Dorsolateral prefrontal cortex (tissue), 120 donors: ENCODE measurements at regions of chr9 and their contacts with region 1.

Region 1: DNA sequence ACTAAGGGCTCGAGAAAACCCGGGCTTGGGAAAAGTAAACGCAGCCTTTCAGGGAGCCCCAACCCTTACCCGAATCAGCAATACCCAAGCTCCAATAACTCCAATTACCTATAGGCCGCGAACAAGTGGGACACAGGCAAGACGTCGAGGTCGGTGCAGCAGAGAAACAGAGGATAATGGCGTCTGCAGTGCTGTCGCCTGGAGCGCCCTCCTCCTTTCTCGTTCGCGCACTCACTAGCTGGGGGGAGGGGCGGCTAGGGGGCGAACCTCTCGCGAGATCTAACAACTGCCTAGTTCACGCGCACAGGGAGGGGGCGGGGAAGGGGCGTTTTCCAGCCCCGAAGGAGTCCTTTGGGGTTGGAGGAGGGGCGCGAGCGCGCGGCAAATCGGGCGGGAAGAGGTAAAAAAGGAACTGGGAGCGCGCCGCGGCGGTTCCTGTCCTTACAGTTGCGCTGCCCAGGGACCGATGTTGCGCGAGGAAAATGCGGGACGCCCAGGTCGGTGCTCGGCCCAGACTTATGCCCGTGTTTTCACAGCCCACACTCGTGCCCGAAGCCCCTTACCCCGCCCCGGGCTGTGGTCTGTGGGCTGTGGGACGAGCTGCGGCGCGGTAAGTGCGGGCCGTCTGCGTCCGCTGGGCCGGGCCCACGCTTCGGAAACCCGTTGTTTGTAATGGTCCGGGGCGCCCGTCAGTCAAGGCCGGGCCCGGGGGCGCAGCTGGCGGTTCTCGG is at the start of gene RMI1:
- DNase-seq: peak; percentile 93 to 99 (median 98)
- H3K4me3 ChIP-seq: peak within 1 kb of the TSS; percentile 69 to 99 (median 93)
- H3K27ac ChIP-seq: peak within 1 kb of the TSS; percentile 94 to 100 (median 99)
- H3K27me3 ChIP-seq: no peaks in the 10 kb centered on the region
- CTCF ChIP-seq: peak in 49 of 56 donors; percentile 18 to 70 (median 49)
- total RNA-seq, gene RMI1: 5.5 to 13.7 (median 9.1) TPM

Region 2: GRCh38 chr9:83707768-83708514 is 272.6 kb before region 1 on chr9 and contains the start of gene UBQLN1:
- intact Hi-C with region 1: loop called in 1 of 2 experiments (anchors 5 kb)
- DNase-seq: peak; percentile 84 to 91 (median 89)
- H3K4me3 ChIP-seq: peak within 1 kb of the TSS; percentile 68 to 100 (median 98)
- H3K27ac ChIP-seq: peak within 1 kb of the TSS; percentile 94 to 100 (median 100)
- H3K27me3 ChIP-seq: no peaks in the 10 kb centered on the region
- CTCF ChIP-seq: peak in 18 of 56 donors; percentile 3 to 42 (median 18)
- total RNA-seq, gene UBQLN1: 109 to 237 (median 183) TPM

Region 3: DNA sequence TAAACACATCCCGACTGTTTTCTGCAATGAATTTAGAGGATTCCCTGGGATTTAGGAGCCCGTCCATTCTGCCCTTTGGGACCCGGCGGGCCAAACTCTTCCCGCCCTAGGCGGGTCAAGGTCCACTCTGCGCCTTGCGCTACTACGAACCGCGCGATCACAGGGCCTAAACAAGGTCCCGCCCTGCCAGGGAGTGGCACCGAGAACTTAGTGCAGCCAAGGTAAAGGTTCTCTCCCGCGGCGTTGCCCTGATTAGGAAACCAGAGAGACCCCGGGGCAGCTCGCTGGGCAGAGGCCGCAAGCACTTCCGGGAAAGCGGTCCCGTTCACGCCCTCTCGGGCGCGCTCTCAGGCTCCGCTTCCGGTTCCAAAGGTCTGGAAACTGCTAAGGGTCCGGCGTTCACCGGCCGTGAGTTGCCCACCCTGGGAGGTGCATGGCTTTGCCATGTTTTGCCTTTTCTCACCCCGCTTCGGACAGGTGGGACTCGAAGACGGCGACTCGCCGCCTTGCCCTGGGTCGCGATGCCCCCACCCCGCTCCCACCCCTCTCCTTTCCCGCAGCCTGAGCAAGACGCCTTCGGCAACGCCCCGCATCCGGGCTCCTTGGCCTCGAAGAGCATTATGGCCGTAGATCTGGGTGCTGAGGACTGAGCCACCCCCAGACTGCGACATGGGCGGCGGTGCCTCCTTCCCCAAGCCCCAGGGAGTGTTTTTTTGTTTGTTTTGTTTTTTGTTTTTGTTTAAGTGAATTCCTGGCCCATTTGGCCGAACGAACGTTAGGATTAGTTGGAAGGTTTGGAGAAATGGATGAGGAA is 23.9 kb before region 1 on chr9:
- intact Hi-C with region 1: loop called (anchors 2 kb)
- DNase-seq: peak; percentile 50 to 78 (median 70)
- H3K4me3 ChIP-seq: peak overlapping the region; percentile 60 to 96 (median 80)
- H3K27ac ChIP-seq: peak overlapping the region in 57 of 59 donors; percentile 26 to 92 (median 78)
- H3K27me3 ChIP-seq: no peaks in the 10 kb centered on the region
- CTCF ChIP-seq: peak in 16 of 56 donors; percentile 3 to 31 (median 13)

Region 4: DNA sequence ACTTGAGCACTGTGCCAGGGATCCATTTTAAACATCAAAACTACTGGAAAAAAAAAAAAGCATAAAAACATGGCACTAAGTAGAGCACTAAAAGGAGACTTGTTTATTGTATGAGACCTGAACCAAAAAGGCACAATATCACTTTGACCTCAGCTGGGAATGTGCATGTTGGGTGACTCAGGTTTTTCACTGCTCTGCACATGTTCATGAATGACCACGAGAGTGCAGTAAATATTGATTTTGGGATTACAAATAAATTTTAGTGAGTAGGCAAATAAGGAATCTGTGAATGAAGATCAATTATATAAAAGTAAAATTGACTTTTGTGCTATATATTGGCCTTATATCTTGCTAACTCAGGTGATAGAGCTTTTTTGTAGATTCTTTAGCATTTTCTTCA is 11.9 kb after region 1 on chr9:
- intact Hi-C with region 1: no loop called
- DNase-seq: no peak
- H3K4me3 ChIP-seq: no peak overlapping the region
- H3K27ac ChIP-seq: no peak overlapping the region
- H3K27me3 ChIP-seq: no peaks in the 10 kb centered on the region
- CTCF ChIP-seq: no peak